ENCODE measurements at regions of chr11 and their contacts with region 1.

Region 1: GRCh38 chr11:66894141-66894540 is 37.3 kb downstream of the LRFN4 start:
- DNase-seq: no peak
- ATAC-seq: no peak
- H3K4me3 ChIP-seq: no peak overlapping the region
- H3K4me3 Mint-ChIP-seq: no peak overlapping the region
- H3K27ac ChIP-seq: no peak overlapping the region
- H3K27ac Mint-ChIP-seq: no peak overlapping the region
- H3K4me1 ChIP-seq: no peaks in the 10 kb centered on the region
- H3K4me1 Mint-ChIP-seq: peaks cover 0 to 3% (median 0%) of the 10 kb centered on the region in 3 donors
- H3K27me3 ChIP-seq: peaks cover 0 to 8% of the 10 kb centered on the region in 2 experiments
- H3K27me3 Mint-ChIP-seq: peaks cover 0 to 3% of the 10 kb centered on the region in 2 donors

Region 2: DNA sequence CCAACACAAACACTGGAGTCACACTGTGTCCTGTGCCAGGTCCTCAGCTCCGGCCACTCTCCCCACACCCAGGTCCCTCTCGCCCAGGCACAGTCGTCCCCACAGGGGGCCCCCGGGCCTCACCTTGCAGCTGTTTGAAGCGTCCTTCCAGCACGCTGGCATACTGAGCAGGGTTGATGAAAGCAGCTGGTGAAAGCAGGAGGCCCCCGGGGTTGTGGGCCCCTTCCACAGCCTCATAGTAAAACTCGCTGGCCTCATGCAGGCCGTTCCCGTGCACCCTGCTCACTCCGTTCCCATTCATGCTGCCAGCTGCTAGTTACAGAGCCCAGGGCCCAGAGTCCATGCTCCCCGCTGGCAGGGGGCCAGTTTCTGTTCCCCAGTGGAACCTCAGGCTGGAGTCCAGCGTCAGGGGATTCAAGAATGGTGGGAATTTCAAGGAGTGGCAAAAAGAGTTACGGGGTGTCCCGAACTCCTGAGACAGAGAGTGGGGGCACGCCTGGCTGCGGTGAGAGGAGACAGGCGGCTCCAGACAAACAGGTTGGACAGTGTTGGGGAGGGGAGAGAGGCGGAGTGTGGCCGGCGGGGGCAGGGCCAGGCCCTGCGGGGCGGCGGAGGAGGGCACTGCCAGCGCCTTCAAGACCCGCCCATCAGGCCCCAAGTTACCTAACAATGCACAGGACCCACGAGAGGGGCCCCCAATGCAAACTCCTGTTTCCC is 175.7 kb before region 1 on chr11:
- CTCF ChIA-PET with region 1: no interaction called
- POLR2A ChIA-PET with region 1: no interaction called
- DNase-seq: no peak
- ATAC-seq: no peak
- H3K4me3 ChIP-seq: no peak overlapping the region
- H3K4me3 Mint-ChIP-seq: no peak overlapping the region
- H3K27ac ChIP-seq: no peak overlapping the region
- H3K27ac Mint-ChIP-seq: no peak overlapping the region
- H3K4me1 ChIP-seq: peaks cover 0 to 6% of the 10 kb centered on the region in 2 experiments
- H3K4me1 Mint-ChIP-seq: peaks cover 4 to 13% (median 5%) of the 10 kb centered on the region in 3 donors
- H3K27me3 ChIP-seq: peaks cover 0 to 67% of the 10 kb centered on the region in 2 experiments
- H3K27me3 Mint-ChIP-seq: peaks cover 28 to 53% of the 10 kb centered on the region in 2 donors

Region 3: DNA sequence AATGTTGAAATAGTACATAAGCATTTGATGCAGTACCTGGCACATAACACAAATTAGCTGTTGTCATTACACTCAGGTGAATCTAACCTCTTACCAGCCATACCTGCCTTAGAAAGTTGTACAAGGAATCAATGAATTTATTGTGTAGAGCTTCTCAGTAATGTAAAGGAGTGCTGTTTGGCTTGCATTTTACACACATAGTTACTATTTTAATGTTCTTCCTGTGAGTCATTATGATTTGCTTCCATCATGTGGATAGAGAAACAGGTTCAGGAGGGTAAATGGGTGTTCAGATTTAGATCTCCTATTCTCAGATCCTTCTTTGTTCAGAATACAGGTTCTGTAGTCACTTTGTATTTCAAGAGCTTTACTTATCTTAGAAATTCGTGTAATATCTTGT is 78.5 kb before region 1 on chr11:
- CTCF ChIA-PET with region 1: no interaction called
- POLR2A ChIA-PET with region 1: no interaction called
- DNase-seq: no peak
- ATAC-seq: no peak
- H3K4me3 ChIP-seq: no peak overlapping the region
- H3K4me3 Mint-ChIP-seq: no peak overlapping the region
- H3K27ac ChIP-seq: no peak overlapping the region
- H3K27ac Mint-ChIP-seq: no peak overlapping the region
- H3K4me1 ChIP-seq: no peaks in the 10 kb centered on the region
- H3K4me1 Mint-ChIP-seq: no peaks in the 10 kb centered on the region
- H3K27me3 ChIP-seq: no peaks in the 10 kb centered on the region
- H3K27me3 Mint-ChIP-seq: no peaks in the 10 kb centered on the region

Region 4: DNA sequence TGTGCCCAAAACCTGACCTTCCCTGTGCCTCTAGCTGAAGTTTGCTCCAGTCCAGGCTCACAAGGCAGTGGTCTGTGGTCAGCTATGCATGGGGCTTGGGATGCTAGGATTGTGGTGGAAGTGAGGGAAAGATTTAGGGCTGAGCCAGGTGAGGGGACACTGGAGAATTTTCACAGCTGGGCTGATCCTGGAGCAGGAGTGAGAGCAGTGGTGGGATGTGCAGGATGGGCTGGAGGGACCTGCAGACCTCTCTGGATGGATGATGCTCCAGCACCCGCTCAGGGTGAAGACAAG is 201.0 kb after region 1 on chr11:
- CTCF ChIA-PET with region 1: no interaction called
- POLR2A ChIA-PET with region 1: no interaction called
- DNase-seq: no peak
- ATAC-seq: no peak
- H3K4me3 ChIP-seq: no peak overlapping the region
- H3K4me3 Mint-ChIP-seq: no peak overlapping the region
- H3K27ac ChIP-seq: no peak overlapping the region
- H3K27ac Mint-ChIP-seq: no peak overlapping the region
- H3K4me1 ChIP-seq: peaks cover 4% of the 10 kb centered on the region in 2 experiments
- H3K4me1 Mint-ChIP-seq: peaks cover 5 to 9% (median 7%) of the 10 kb centered on the region in 3 donors
- H3K27me3 ChIP-seq: peaks cover 0 to 4% of the 10 kb centered on the region in 2 experiments
- H3K27me3 Mint-ChIP-seq: no peaks in the 10 kb centered on the region

Region 5: DNA sequence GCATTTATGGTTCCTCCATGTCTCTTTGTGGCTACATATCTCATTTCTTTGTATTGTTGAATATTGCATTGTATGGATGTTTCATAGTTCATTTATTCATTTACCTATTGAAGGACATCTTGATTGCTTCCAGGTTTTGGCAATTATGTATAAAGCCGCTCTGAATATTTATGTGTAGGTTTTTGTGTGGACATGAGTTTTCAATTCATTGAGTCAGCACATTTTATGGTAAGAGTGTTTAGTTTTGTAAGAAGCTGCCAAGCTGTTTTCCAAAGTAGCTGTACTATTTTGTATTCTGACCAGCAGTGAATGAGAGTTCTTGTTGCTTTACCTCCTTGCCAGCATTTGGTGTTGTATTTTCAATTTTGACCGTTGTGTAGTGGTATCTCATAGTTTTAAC is 264.1 kb after region 1 on chr11:
- CTCF ChIA-PET with region 1: no interaction called
- POLR2A ChIA-PET with region 1: interaction called in 1 of 2 experiments, 11 read pairs
- DNase-seq: no peak
- ATAC-seq: no peak
- H3K4me3 ChIP-seq: no peak overlapping the region
- H3K4me3 Mint-ChIP-seq: no peak overlapping the region
- H3K27ac ChIP-seq: no peak overlapping the region
- H3K27ac Mint-ChIP-seq: peak overlapping the region; percentile 68 to 77
- H3K4me1 ChIP-seq: peaks cover 0 to 14% of the 10 kb centered on the region in 2 experiments
- H3K4me1 Mint-ChIP-seq: peaks cover 37 to 49% (median 48%) of the 10 kb centered on the region in 3 donors
- H3K27me3 ChIP-seq: no peaks in the 10 kb centered on the region
- H3K27me3 Mint-ChIP-seq: no peaks in the 10 kb centered on the region